ENCODE measurements at regions of chr15 and their contacts with region 1.

Region 1: DNA sequence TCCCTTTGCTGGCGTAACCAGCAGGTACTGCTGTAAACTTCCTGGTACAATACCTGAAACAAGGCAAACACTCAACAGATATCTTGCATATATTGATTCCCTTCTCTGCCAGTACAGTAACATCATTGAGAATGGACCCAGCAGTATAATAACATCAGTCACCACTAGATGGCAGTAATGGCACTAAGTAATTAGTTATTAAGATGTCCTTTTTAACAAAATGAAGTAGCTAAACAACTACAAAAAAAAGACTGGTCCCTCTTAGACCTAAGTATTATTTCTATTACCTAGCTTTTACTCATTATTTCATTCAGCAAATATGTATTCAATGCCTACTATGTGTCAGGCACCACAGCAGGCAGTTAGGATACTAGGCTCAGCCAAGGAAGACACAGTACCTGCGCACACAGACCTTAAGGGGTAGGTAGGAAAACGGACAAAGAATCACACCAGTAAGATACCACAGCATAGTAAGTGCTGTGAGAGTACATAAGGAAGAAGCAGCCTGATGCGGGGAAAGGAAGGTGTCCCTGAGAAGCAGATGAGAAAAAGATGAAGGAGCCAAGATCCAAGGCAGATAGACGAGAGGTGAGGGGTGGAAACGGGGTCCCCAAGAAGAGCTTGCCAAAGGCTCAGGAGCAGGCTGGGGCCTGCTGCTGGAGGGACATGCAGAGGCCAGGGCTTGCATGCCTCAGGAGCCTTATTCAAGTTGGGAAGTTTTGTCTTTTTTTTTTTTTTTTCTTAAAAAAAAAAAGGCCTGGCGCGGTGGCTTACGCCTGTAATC is 102.8 kb upstream of the CHD2 start:
- DNase-seq: no peak
- ATAC-seq: peak; percentile 84
- H3K4me3 Mint-ChIP-seq: no peak overlapping the region
- H3K27ac Mint-ChIP-seq: peak overlapping the region; percentile 68
- H3K4me1 Mint-ChIP-seq: peaks cover 6% of the 10 kb centered on the region
- H3K27me3 Mint-ChIP-seq: no peaks in the 10 kb centered on the region
- CTCF ChIP-seq: peak; percentile 22

Region 2: GRCh38 chr15:91759560-91759959 is 1037.8 kb before region 1 on chr15:
- CTCF ChIA-PET with region 1: no interaction called
- POLR2A ChIA-PET with region 1: no interaction called
- intact Hi-C with region 1: no loop called
- DNase-seq: no peak
- ATAC-seq: no peak
- H3K4me3 Mint-ChIP-seq: no peak overlapping the region
- H3K27ac Mint-ChIP-seq: no peak overlapping the region
- H3K4me1 Mint-ChIP-seq: no peaks in the 10 kb centered on the region
- H3K27me3 Mint-ChIP-seq: peaks cover 3% of the 10 kb centered on the region
- CTCF ChIP-seq: no peak

Region 3: DNA sequence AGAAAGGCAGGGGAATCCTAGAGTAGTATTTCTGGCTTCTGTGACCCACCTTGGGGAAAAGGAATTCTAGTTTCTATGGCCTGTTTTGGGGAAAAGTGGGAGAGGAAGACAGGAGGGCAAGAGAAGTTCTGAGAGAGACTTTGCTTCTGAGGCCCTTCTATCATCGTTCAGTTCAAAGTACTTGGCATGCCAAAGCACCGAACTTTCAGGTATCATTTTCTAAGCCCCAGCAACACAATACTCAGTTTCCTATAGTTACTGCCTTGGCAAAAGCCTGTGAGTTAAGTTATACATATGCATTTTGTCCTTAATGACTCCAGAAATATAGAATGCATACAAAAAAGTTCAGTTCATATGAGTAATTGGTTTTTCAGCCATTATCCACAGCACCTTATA is 28.6 kb after region 1 on chr15:
- CTCF ChIA-PET with region 1: no interaction called
- POLR2A ChIA-PET with region 1: interaction called, 13 read pairs
- intact Hi-C with region 1: no loop called
- DNase-seq: no peak
- ATAC-seq: no peak
- H3K4me3 Mint-ChIP-seq: no peak overlapping the region
- H3K27ac Mint-ChIP-seq: peak overlapping the region; percentile 0
- H3K4me1 Mint-ChIP-seq: peaks cover 62% of the 10 kb centered on the region
- H3K27me3 Mint-ChIP-seq: no peaks in the 10 kb centered on the region
- CTCF ChIP-seq: no peak

Region 4: DNA sequence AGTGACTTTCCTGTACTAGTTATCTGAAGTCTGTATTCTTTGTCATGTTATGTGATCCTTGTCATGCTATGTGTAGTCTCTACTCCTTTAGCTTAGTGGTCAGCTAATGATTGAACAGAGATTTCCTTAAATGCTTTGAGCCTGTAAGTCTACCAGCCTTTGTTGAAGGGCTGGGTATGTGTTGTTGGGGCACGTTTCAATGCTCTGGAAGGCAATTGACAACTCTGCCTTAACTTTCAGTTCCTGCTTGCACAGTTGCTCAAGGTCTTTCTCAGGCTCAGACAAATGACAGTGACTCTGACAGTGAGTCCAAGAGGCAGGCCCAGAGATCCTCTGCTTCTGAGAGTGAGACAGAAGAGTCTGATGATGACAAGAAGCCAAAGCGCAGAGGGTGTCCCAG is 192.1 kb after region 1 on chr15:
- CTCF ChIA-PET with region 1: interaction called, 3 read pairs
- POLR2A ChIA-PET with region 1: no interaction called
- intact Hi-C with region 1: loop called (anchors 5 kb)
- DNase-seq: no peak
- ATAC-seq: peak; percentile 57
- H3K4me3 Mint-ChIP-seq: no peak overlapping the region
- H3K27ac Mint-ChIP-seq: peak overlapping the region; percentile 28
- H3K4me1 Mint-ChIP-seq: peaks cover 16% of the 10 kb centered on the region
- H3K27me3 Mint-ChIP-seq: no peaks in the 10 kb centered on the region
- CTCF ChIP-seq: no peak